ENCODE measurements at regions of chr5 and their contacts with region 1.

Region 1: DNA sequence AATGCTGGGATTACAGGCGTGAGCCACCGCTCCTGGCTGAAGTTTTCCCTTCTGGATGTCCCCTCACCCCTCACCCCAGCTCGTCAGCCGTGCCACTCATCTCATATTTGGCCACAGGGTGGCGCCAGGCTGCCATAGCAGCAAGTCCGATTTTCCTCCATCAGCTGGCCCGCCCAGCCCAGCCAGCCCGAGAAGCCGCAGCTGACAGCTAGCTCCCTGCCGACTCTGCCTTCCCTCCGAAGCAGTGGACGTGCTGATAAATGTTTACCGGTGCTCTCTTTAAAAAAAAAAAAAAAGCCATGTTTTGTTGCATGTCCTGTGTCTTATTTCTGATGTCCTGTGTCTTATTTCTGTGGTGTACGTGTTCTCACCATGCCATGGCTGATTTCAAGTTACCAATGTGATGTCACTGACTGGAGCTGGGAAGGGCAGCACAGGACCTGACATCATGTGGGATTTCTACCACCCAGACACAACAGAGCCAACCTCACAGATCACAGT is 58.3 kb downstream of the PFDN1 start:
- DNase-seq: peak; percentile 91 to 96 (median 94)
- ATAC-seq: peak; percentile 29 to 53 (median 48)
- H3K4me3 ChIP-seq: no peak overlapping the region
- H3K27ac ChIP-seq: peak overlapping the region in 10 of 12 donors; percentile 9 to 91 (median 74)
- H3K4me1 ChIP-seq: peaks cover 19 to 97% (median 76%) of the 10 kb centered on the region in 12 donors
- H3K27me3 ChIP-seq: no peaks in the 10 kb centered on the region
- CTCF ChIP-seq: peak; percentile 82 to 95 (median 89)
- POLR2A ChIP-seq: peak in 1 of 2 donors; percentile 21

Region 2: GRCh38 chr5:140174465-140175366 is 69.9 kb before region 1 on chr5 and contains the start of gene CYSTM1:
- intact Hi-C with region 1: loop called in 8 of 10 experiments (anchors 1 to 5 kb)
- DNase-seq: peak; percentile 96 to 98 (median 98)
- ATAC-seq: peak; percentile 89 to 96 (median 94)
- H3K4me3 ChIP-seq: peak within 1 kb of the TSS; percentile 78 to 100 (median 92)
- H3K27ac ChIP-seq: peak within 1 kb of the TSS; percentile 86 to 100 (median 98)
- H3K4me1 ChIP-seq: peaks cover 0 to 42% (median 26%) of the 10 kb centered on the region in 12 donors
- H3K27me3 ChIP-seq: no peaks in the 10 kb centered on the region
- CTCF ChIP-seq: peak in 1 of 12 donors; percentile 15
- POLR2A ChIP-seq: peak in 1 of 2 donors; percentile 91
- total RNA-seq, gene CYSTM1: 58.1 to 222 (median 94.5) TPM

Region 3: GRCh38 chr5:140196115-140196814 is 48.3 kb before region 1 on chr5:
- intact Hi-C with region 1: no loop called
- DNase-seq: no peak
- ATAC-seq: no peak
- H3K4me3 ChIP-seq: no peak overlapping the region
- H3K27ac ChIP-seq: no peak overlapping the region
- H3K4me1 ChIP-seq: peaks cover 0 to 36% (median 15%) of the 10 kb centered on the region in 12 donors
- H3K27me3 ChIP-seq: no peaks in the 10 kb centered on the region
- CTCF ChIP-seq: no peak
- POLR2A ChIP-seq: no peak

Region 4: GRCh38 chr5:140284013-140284412 is 39.4 kb after region 1 on chr5:
- intact Hi-C with region 1: loop called in 1 of 10 experiments (anchors 5 kb)
- DNase-seq: no peak
- ATAC-seq: peak; percentile 52 to 76 (median 60)
- H3K4me3 ChIP-seq: no peak overlapping the region
- H3K27ac ChIP-seq: peak overlapping the region in 4 of 12 donors; percentile 2 to 72 (median 30)
- H3K4me1 ChIP-seq: peaks cover 0 to 36% (median 23%) of the 10 kb centered on the region in 12 donors
- H3K27me3 ChIP-seq: no peaks in the 10 kb centered on the region
- CTCF ChIP-seq: no peak
- POLR2A ChIP-seq: no peak

Region 5: DNA sequence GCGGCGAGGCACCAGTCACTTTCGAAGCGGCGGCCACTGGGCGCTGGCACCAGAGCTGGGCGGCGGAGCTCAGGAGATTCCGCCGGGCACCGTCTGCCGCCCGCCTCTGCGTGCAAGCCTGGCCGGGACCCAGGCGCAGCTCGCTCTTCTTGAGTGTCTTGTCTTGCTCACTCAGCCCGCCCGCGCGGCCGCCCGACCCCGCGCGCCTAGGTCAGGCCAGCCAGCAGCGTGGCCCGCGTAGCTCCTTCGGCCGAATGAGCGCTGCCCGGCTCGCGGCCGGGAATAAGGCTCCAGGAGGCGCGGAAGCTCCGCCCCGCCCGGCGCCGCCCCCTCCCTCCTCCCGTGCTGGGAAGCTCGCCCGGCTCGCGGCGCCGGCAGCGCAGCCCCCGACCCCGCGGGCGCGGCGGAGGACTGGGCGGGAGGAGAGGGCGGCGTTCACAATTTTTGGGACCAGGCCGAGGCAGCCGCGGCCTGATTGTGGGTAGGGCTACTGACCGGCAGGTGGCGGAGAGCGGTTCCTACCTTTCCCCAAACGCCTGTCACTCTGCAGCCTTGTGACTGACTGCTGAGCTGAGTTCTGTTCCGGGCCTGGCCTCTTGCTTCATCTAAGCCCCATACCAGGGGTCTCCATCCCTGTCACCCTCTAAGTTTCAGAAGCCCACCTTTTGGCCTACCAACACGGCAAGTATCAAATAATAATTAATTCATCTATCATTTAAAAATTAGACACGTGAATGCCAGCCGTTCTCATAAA is 102.0 kb after region 1 on chr5 and contains the start of gene HBEGF:
- intact Hi-C with region 1: loop called in 9 of 10 experiments (anchors 1 to 2 kb)
- DNase-seq: peak; percentile 88 to 93 (median 90)
- ATAC-seq: peak; percentile 53 to 85 (median 78)
- H3K4me3 ChIP-seq: peak within 1 kb of the TSS; percentile 43 to 99 (median 86)
- H3K27ac ChIP-seq: peak within 1 kb of the TSS; percentile 54 to 99 (median 94)
- H3K4me1 ChIP-seq: peaks cover 8 to 64% (median 53%) of the 10 kb centered on the region in 12 donors
- H3K27me3 ChIP-seq: no peaks in the 10 kb centered on the region
- CTCF ChIP-seq: peak; percentile 25 to 75 (median 44)
- POLR2A ChIP-seq: peak; percentile 79 to 98
- total RNA-seq, gene HBEGF: 23.6 to 60.1 (median 34.9) TPM

Region 6: GRCh38 chr5:140357726-140358093 is 113.1 kb after region 1 on chr5:
- intact Hi-C with region 1: loop called in 2 of 10 experiments (anchors 2 kb)
- DNase-seq: peak; percentile 78 to 88 (median 82)
- ATAC-seq: peak; percentile 82 to 94 (median 94)
- H3K4me3 ChIP-seq: peak overlapping the region in 7 of 12 donors; percentile 3 to 36 (median 10)
- H3K27ac ChIP-seq: peak overlapping the region in 1 of 12 donors; percentile 0
- H3K4me1 ChIP-seq: peaks cover 0 to 16% (median 7%) of the 10 kb centered on the region in 12 donors
- H3K27me3 ChIP-seq: no peaks in the 10 kb centered on the region
- CTCF ChIP-seq: peak; percentile 84 to 97 (median 90)
- POLR2A ChIP-seq: no peak

Region 7: GRCh38 chr5:140391312-140391711 is 146.7 kb after region 1 on chr5:
- intact Hi-C with region 1: no loop called
- DNase-seq: no peak
- ATAC-seq: no peak
- H3K4me3 ChIP-seq: no peak overlapping the region
- H3K27ac ChIP-seq: no peak overlapping the region
- H3K4me1 ChIP-seq: no peaks in the 10 kb centered on the region
- H3K27me3 ChIP-seq: no peaks in the 10 kb centered on the region
- CTCF ChIP-seq: no peak
- POLR2A ChIP-seq: no peak